OCI-LY7 (cell line): ENCODE measurements at regions of chr19 and their contacts with region 1.

Region 1: DNA sequence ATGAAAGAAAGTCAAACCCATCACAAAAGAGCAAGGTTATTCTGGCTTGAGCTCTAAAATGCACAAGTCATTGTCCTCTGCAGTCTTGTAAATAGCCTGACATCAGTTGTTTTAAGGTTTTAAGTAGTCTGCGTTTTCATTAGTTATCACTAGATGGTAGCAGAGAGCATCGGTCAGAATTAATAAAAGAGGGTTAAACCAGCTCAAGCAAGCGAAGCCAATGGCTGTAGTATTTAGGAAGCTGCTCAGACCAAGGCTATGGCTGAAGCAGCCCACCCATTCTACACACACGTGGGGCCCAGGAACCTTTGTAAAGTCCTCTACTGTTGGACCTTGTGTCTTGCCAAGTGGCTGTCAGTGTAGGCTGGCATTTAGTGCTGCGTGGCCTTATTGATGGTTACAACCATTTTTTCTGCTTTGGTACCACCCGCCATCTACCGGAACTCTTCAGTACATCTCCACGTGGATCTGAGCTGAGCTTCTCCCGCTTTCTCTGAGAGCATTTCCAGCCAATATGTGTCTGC is 13.3 kb upstream of the ZNF57 start:
- DNase-seq: peak; percentile 82
- H3K4me3 ChIP-seq: no peak overlapping the region
- H3K27ac ChIP-seq: peak overlapping the region; percentile 74
- H3K4me1 ChIP-seq: peaks cover 33% of the 10 kb centered on the region
- CTCF ChIP-seq: peak; percentile 84

Region 2: DNA sequence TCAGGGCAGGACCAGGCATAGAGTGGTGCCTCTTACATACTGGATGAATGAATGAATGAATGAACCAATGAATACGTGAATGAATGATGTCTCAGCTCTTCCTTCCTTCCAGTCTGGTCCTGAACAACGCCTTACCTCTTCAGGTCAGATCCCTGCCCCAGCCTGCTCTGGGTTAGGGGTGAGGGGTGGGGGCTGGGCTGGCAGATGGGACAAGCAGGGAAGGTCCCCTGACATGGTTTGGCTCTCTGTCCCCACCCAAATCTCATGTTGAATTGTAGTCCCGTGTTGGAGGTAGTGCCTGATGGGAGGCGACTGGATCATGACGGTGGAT is 175.6 kb before region 1 on chr19:
- CTCF ChIA-PET with region 1: interaction called, 10 read pairs
- POLR2A ChIA-PET with region 1: no interaction called
- intact Hi-C with region 1: no loop called
- DNase-seq: no peak
- H3K4me3 ChIP-seq: no peak overlapping the region
- H3K27ac ChIP-seq: no peak overlapping the region
- H3K4me1 ChIP-seq: peaks cover 26% of the 10 kb centered on the region
- CTCF ChIP-seq: no peak

Region 3: DNA sequence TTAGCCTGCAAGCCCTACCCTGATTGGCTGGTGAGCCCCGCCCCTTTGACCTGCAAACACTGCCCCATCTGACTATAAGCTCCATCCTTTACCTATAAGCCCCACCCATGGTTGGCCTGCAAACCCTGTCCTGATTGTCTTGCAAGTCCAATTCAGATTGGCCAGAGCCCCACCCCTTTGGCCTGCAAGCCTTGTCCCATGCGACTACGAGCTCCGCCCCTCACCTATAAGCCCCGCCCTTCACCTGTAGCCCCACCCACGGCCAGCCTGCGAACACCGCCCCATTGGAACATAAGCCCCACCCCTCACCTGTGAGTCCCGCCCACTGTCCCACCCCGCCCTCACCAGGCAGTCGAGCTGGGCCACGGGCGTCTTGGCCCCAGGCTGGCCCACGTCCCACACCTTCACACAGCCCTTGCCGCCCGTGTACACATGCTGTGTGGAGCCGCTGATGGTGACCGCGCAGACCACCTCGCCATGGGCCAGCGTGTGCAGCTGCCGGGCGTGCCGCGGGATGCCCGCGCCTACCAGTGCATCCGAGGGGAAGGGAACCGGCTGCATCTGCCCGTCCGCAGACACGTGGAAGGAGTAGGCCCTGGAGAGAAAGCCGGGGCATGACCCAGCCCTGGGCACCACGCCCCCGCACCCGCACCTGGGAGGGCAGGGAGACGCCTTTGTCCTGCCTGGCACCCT is 118.8 kb after region 1 on chr19:
- CTCF ChIA-PET with region 1: no interaction called
- POLR2A ChIA-PET with region 1: no interaction called
- intact Hi-C with region 1: no loop called
- DNase-seq: peak; percentile 48
- H3K4me3 ChIP-seq: no peak overlapping the region
- H3K27ac ChIP-seq: no peak overlapping the region
- H3K4me1 ChIP-seq: peaks cover 6% of the 10 kb centered on the region
- CTCF ChIP-seq: no peak